Dendritic cell treated with granulocyte-macrophage colony-stimulating factor and Interleukin-4, amounts not matched to agents 40 ng/mL and 50 ng/mL, for 4 days (primary cell): ENCODE measurements at regions of chr19 and their contacts with region 1.

Region 1: DNA sequence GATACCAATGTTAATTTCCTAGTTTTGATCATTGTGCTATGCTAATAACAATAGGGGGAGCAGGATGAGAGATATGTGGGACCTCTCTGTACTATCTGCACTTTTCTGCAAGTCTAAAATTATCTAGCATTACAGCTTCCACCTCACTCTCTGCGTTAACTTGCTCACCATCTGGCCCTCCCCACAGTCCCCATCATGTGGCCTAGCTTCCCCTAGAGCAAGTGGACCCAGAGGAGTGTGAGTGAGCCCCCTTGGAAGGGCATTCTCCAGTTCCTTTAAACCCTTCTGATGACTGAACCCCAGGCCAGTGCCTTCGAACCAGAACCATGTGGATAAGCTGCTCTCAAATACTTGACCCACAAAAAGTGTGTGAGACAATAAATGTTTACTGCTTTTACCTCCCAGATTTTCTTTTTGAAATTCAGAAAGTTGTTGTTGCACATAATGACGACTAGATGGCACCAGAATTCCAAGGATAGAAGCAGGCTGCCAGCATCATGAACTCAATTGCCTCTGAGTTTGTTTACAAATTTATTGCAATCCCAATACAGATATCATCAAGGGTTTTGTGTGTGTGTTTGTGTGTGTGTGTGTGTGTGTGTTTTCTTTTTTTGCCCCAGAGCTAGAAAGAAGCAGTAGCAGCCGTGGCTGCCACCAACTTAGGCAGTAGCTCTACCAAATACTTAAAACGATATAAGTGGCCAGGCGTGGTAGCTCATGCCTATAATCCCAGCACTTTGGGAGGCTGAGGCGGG is 49.0 kb upstream of the ZNF780A start:
- H3K4me3 Mint-ChIP-seq: no peak overlapping the region
- H3K27ac Mint-ChIP-seq: no peak overlapping the region
- H3K4me1 Mint-ChIP-seq: peaks cover 7% of the 10 kb centered on the region
- H3K27me3 Mint-ChIP-seq: peaks cover 18% of the 10 kb centered on the region

Region 2: DNA sequence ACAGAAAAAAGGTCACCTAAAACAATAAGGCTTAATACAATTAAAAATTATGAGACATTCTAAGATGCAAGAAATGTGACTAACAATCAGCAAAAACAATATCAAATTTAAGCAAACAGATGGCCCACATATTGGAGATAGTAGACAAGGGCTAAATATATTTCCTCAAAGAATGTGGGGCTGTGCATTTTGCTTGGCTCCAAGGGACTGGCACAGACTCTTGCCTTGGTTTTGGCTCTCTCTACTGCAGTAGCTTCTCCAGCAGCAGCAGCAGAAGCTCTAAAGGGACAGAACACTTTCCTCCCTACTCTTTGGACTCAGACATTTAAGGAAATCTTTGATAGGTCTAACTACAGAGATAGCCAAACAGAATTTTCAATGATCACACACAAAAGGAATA is 10.7 kb before region 1 on chr19:
- intact Hi-C with region 1: no loop called
- H3K4me3 Mint-ChIP-seq: no peak overlapping the region
- H3K27ac Mint-ChIP-seq: no peak overlapping the region
- H3K4me1 Mint-ChIP-seq: no peaks in the 10 kb centered on the region
- H3K27me3 Mint-ChIP-seq: peaks cover 46% of the 10 kb centered on the region

Region 3: GRCh38 chr19:40221858-40222837 is 82.4 kb after region 1 on chr19:
- intact Hi-C with region 1: loop called (anchors 1 kb)
- H3K4me3 Mint-ChIP-seq: no peak overlapping the region
- H3K27ac Mint-ChIP-seq: no peak overlapping the region
- H3K4me1 Mint-ChIP-seq: peaks cover 28% of the 10 kb centered on the region
- H3K27me3 Mint-ChIP-seq: peaks cover 89% of the 10 kb centered on the region